Psoas muscle (tissue), 8 donors: ENCODE measurements at regions of chr6 and their contacts with region 1.

Region 1: DNA sequence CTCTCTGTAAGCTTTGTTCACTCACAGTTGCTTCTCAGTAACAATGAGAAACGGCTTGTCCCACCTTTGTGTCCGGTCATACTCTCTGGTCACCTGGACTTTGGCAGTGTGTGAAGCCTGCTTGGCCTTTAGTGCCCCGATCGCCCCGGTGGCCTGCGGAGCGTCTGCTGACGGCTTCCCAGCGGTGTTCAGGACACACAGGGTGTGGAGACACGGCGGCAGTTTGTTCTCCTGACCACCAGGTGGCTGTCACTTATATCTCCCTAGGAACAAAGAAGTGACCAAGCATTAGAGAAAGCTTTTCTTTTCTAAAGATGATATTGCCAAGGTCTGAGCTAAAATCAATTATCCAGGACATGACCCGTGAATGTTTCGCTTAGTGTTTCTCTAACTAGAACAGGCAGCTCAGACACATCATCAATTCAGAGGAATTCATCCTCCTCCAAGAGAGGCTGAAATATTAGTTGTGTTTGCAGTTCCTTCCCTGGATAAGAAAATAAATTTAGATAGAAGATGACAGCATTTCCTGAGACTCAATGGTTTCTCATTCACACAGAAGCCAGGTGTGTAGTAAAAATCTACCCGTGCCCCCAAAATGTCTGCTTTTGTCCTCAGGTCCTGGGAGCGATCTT is 167.4 kb upstream of the THBS2 start:
- DNase-seq: no peak
- ATAC-seq: no peak
- H3K4me3 ChIP-seq: no peak overlapping the region
- H3K27ac ChIP-seq: no peak overlapping the region
- H3K4me1 ChIP-seq: no peaks in the 10 kb centered on the region
- H3K27me3 ChIP-seq: peaks cover 0 to 7% (median 0%) of the 10 kb centered on the region in 3 donors
- CTCF ChIP-seq: peak; percentile 39

Region 2: DNA sequence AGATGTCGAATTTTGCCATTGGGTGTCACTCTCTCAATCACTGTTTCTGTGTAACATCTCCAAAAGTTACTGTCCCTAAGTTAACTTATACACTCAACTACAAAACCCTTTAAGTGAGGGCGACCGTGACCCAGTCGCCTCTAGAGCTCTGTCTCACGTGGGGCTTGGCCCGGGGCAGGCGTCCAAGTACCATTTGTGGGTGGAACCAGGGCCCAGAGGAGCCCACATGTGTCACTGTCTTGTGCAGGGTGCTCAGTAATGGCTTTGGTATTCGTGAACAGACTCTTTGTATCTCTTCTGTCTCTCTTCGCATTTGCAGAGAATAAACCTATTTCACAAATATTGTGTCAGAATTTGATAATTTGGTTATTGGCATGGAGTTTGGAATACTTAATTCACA is 57.4 kb before region 1 on chr6:
- intact Hi-C with region 1: no loop called
- DNase-seq: peak in 1 of 2 donors; percentile 36
- ATAC-seq: no peak
- H3K4me3 ChIP-seq: no peak overlapping the region
- H3K27ac ChIP-seq: no peak overlapping the region
- H3K4me1 ChIP-seq: no peaks in the 10 kb centered on the region
- H3K27me3 ChIP-seq: no peaks in the 10 kb centered on the region
- CTCF ChIP-seq: no peak

Region 3: GRCh38 chr6:169654598-169655391 is 233.8 kb after region 1 on chr6:
- intact Hi-C with region 1: loop called in 1 of 2 experiments (anchors 10 kb)
- DNase-seq: peak; percentile 69 to 87
- ATAC-seq: peak; percentile 91 to 99 (median 95)
- H3K4me3 ChIP-seq: peak overlapping the region; percentile 61
- H3K27ac ChIP-seq: peak overlapping the region; percentile 71
- H3K4me1 ChIP-seq: no peaks in the 10 kb centered on the region
- H3K27me3 ChIP-seq: no peaks in the 10 kb centered on the region
- CTCF ChIP-seq: no peak